ENCODE measurements at regions of chr5 and their contacts with region 1.

Region 1: DNA sequence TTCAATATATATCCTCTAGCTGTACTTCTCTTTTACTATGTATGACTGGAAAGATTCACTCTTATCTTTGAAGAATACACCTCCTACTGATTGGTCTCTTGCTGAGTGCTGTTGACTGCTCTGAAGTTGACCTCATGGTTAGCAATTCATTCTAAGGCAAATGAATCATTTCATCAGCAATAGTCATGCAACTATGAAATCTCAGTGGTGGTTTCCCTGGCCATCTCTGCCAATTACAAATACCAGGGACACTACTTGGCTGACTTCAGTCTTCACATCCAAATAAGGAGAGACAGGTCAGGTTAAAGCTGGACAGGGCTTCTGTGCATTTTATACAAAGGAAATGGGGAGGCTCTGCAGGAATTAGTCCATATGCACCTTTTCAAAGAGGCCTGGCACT is 333.5 kb upstream of the ACTBL2 start:
- DNase-seq: peak; percentile 94
- H3K4me3 ChIP-seq: no peak overlapping the region
- CTCF ChIP-seq: no peak

Region 2: DNA sequence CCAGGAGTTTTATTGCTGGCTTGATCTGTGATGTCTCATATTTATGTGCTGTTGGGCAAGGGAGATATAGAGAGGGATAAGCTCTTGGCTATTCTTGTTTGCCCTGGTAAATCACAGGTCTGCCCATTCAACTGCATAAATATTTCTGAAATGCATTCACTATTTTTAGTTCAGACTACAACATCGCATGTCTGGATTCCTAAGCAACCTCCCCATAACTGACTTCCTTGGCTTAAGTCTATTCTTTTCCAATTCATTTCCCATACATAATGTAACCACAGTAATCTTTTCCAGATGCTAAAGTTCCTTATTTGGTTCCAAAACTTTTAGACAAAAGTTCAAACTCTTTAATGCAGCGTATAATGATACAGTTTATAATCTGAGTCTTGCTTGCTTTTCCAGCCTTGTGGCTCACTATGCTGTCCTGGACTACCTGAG is 12.1 kb before region 1 on chr5:
- CTCF ChIA-PET with region 1: interaction called, 12 read pairs
- POLR2A ChIA-PET with region 1: interaction called, 3 read pairs
- DNase-seq: peak; percentile 95
- H3K4me3 ChIP-seq: no peak overlapping the region
- CTCF ChIP-seq: no peak

Region 3: GRCh38 chr5:57850109-57850508 is 34.0 kb after region 1 on chr5:
- CTCF ChIA-PET with region 1: no interaction called
- POLR2A ChIA-PET with region 1: no interaction called
- DNase-seq: no peak
- H3K4me3 ChIP-seq: no peak overlapping the region
- CTCF ChIP-seq: no peak

Region 4: DNA sequence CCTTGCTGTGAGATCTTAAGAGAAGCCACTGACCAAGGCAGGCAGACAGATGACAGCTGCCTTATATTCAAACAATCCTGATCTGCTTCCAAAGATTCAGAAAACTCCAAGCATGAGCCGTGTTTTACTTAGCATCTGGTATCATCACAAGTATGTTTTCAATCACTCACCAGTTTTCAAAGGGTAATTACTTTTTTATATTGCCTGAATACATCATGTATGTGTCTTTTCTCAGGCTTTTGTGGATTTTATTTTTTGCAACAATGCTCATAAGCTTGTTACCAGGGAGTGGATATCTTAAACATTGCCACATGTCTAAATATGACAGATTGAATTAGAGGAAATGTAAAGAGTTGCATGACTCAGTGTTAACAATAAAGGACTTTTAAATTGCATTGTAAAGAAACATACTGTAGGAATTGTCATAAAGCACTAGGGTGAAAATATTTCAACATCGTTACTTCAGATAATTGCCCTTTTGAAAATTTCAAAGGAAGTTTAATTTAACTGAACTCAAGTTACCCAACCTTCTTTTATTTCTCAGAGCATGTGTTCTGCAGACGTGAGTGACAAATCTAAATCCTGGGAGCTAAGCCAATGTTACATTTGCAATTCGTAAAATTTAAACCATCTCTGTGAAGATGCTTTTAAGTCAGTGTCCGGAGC is 317.7 kb after region 1 on chr5:
- CTCF ChIA-PET with region 1: no interaction called
- POLR2A ChIA-PET with region 1: no interaction called
- DNase-seq: no peak
- H3K4me3 ChIP-seq: no peak overlapping the region; the same call in 1 of the 2 replicates
- CTCF ChIP-seq: no peak